ENCODE measurements at regions of chr12 and their contacts with region 1.

Region 1: DNA sequence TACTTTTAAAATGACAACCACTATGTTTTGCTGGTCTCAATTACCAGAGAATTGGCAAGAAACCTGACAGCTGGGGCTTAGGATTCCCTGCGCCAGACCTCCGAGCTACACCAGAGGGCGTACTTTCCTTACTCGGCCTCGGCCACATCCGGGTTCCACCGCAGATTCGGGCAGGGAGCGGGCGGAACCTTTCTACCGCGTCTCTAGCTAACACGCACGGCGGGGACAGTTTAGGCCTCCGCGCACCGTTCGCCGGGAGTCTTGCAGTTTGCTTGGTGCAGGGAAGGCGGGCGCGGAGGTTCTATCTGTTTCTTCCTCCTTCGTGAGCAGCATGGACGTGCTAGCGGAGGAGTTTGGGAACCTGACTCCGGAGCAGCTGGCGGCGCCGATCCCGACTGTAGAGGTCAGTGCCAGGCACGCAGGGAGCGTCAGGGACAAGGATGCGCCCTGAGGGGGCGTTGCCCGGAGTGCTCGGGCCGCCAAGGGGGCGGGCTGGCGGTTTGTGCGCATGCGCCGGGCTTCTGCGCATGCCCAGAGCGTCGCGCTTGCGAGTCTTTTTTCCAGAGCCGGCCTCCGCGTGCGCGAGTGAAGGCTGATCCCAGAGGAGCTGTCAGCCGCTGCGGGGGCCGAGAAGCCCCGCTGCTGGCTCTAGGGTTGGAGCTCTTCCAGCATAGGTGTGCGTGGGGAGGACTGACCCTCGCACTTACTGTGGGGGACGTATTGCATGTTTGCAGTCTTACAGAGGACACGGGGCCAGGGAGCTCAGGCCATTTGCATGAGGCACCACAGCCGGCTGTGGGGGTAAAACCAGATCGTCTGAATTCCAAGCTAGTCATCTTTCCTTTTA is at the start of gene POLR3B:
- DNase-seq: peak; percentile 92 to 98
- ATAC-seq: peak; percentile 95
- H3K4me3 ChIP-seq: peak within 1 kb of the TSS; percentile 66
- H3K27ac ChIP-seq: peak within 1 kb of the TSS; percentile 90 to 92
- H3K4me1 ChIP-seq: peaks cover 15% of the 10 kb centered on the region; the same call in 2 of the 3 replicates
- CTCF ChIP-seq: peak; percentile 89
- EP300 ChIP-seq: no peak
- POLR2A ChIP-seq: peak; percentile 92
- RAD21 ChIP-seq: peak; percentile 77 to 79
- polyA plus RNA-seq, gene POLR3B: 9.5 and 10.7 TPM in 2 replicates

Region 2: DNA sequence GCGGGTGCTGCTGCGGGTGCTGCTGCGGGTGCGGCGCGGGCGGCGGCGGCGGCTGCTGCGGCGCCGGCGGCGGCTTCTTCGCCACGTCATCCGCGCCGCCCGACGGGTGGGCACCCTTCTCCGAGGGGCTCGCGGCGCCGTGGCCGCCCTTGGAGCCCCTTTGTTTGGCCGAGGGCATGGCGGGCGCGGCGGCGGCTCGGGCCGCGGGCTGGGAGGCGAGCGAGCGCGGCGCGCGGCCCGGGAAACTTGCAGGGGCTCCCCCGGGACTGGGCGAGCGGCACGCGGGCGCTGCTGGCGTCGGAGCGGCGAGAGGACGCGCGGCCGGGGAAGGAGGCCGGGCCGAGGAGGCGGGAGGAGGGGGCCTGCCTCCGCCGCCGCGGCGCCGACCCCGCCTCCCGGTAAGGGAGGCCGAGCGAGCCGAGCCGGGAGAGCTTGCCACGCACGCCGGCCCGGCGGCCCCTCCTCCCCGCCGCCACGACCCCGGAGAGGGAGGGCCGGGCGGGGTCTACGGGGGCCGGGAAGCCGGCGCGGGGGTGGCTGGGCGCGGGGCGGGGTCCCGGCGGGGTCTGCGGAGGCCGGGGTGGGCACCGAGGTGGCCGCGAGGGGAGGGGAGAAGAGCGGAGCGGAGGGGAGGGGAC is 110.0 kb before region 1 on chr12 and contains the start of gene CKAP4:
- CTCF ChIA-PET with region 1: interaction called, 10 read pairs
- POLR2A ChIA-PET with region 1: interaction called, 13 read pairs
- DNase-seq: peak; percentile 65 to 74
- ATAC-seq: peak; percentile 64 to 75
- H3K4me3 ChIP-seq: peak within 1 kb of the TSS; percentile 98
- H3K27ac ChIP-seq: peak within 1 kb of the TSS; percentile 95 to 97
- H3K4me1 ChIP-seq: peaks cover 29% of the 10 kb centered on the region
- CTCF ChIP-seq: no peak; the same call in 2 of the 3 replicates
- EP300 ChIP-seq: no peak
- POLR2A ChIP-seq: peak; percentile 68
- RAD21 ChIP-seq: no peak
- polyA plus RNA-seq, gene CKAP4: 96.5 and 108 TPM in 2 replicates

Region 3: GRCh38 chr12:106345739-106346138 is 12.0 kb before region 1 on chr12:
- CTCF ChIA-PET with region 1: interaction called, 15 read pairs
- POLR2A ChIA-PET with region 1: interaction called, 14 read pairs
- DNase-seq: peak; percentile 29 to 87
- ATAC-seq: peak; percentile 88 to 97
- H3K4me3 ChIP-seq: no peak overlapping the region
- H3K27ac ChIP-seq: 0 out of 6 replicates have a peak overlapping the region, but pooled peaks of 1 of the 2 experiments have one; percentile 47
- H3K4me1 ChIP-seq: peaks cover 13% of the 10 kb centered on the region
- CTCF ChIP-seq: peak; percentile 49
- EP300 ChIP-seq: no peak
- POLR2A ChIP-seq: no peak
- RAD21 ChIP-seq: peak; percentile 59 to 80

Region 4: GRCh38 chr12:106646472-106646871 is 288.7 kb after region 1 on chr12:
- CTCF ChIA-PET with region 1: no interaction called
- POLR2A ChIA-PET with region 1: interaction called, 11 read pairs
- DNase-seq: no peak
- ATAC-seq: no peak
- H3K4me3 ChIP-seq: no peak overlapping the region
- H3K27ac ChIP-seq: no peak overlapping the region
- H3K4me1 ChIP-seq: peaks cover 14% of the 10 kb centered on the region; the same call in 1 of the 3 replicates
- CTCF ChIP-seq: no peak
- EP300 ChIP-seq: no peak
- POLR2A ChIP-seq: no peak
- RAD21 ChIP-seq: no peak

Region 5: DNA sequence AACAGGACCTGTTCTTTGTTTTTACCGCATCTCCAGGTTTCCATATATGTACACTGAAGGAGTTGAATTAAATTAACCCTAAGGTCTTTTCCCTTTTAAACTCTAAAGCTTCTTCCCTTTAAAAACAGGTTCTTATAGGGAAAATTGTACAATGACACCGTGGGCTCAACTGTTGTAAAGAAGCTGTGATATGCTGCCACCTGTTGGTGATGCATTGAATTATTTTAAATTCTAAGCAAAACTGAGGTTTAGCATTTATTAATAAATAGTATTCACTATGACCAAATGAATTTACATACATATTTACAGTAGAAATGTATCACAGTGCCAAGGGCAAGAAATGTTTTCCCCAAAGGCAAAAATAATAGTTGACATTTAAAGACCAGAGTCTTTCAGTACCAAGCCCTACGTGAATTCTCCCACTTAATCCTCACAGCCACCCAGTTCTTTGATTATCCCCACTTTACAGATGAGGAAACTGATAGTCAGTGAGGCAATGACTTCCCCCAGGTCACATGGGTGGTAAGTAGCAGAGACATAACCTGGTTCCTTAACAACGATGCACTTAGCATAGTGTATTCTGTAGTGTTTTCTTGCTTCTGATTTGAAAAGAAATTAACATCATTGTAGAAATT is 562.3 kb after region 1 on chr12:
- CTCF ChIA-PET with region 1: interaction called, 49 read pairs
- POLR2A ChIA-PET with region 1: interaction called, 11 read pairs
- DNase-seq: peak; percentile 55 to 59
- ATAC-seq: peak; percentile 44 to 74; a peak in 3 of 6 replicates
- H3K4me3 ChIP-seq: no peak overlapping the region
- H3K27ac ChIP-seq: no peak overlapping the region
- H3K4me1 ChIP-seq: no peaks in the 10 kb centered on the region
- CTCF ChIP-seq: peak; percentile 91
- EP300 ChIP-seq: no peak
- POLR2A ChIP-seq: no peak
- RAD21 ChIP-seq: peak; percentile 86 to 89